Mammary epithelial cell (primary cell): ENCODE measurements at regions of chrX and their contacts with region 1.

Region 1: DNA sequence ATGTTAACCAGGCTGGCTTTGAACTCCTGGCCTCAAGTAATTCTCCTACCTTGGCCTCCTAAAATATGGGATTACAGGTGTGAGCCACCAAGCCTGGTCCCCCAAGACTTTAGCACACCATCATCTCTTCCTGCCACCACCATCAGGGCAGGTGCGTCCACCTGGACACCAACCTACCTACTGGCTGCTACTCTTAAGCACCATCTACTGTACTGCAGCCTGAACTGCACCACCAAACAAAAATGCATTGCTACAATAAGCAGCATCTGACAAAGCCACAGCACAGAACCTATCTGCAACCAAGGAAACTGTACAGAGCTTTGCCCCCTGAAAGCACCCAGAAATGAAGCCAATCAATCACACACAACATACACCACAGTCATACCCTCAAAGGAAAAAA is 139.7 kb downstream of the EFHC2 start:
- DNase-seq: peak; percentile 3
- H3K4me3 ChIP-seq: no peak overlapping the region
- H3K27ac ChIP-seq: no peak overlapping the region
- H3K4me1 ChIP-seq: no peaks in the 10 kb centered on the region
- H3K27me3 ChIP-seq: peaks cover 2% of the 10 kb centered on the region
- CTCF ChIP-seq: peak; percentile 42 to 62

Region 2: GRCh38 chrX:44267116-44267515 is 63.3 kb after region 1 on chrX:
- CTCF ChIA-PET with region 1: no interaction called
- dilution Hi-C with region 1: no loop called
- in situ Hi-C with region 1: no loop called
- intact Hi-C with region 1: no loop called
- DNase-seq: no peak
- H3K4me3 ChIP-seq: no peak overlapping the region
- H3K27ac ChIP-seq: no peak overlapping the region
- H3K4me1 ChIP-seq: no peaks in the 10 kb centered on the region
- H3K27me3 ChIP-seq: peaks cover 3% of the 10 kb centered on the region
- CTCF ChIP-seq: no peak

Region 3: GRCh38 chrX:44352758-44353157 is 149.0 kb after region 1 on chrX:
- CTCF ChIA-PET with region 1: no interaction called
- dilution Hi-C with region 1: no loop called
- in situ Hi-C with region 1: no loop called
- intact Hi-C with region 1: loop called (anchors 5 kb)
- DNase-seq: peak; percentile 80
- H3K4me3 ChIP-seq: no peak overlapping the region
- H3K27ac ChIP-seq: peak overlapping the region; percentile 38
- H3K4me1 ChIP-seq: peaks cover 12% of the 10 kb centered on the region
- H3K27me3 ChIP-seq: no peaks in the 10 kb centered on the region
- CTCF ChIP-seq: no peak

Region 4: GRCh38 chrX:44747969-44748368 is 544.2 kb after region 1 on chrX:
- CTCF ChIA-PET with region 1: no interaction called
- dilution Hi-C with region 1: no loop called
- in situ Hi-C with region 1: no loop called
- intact Hi-C with region 1: no loop called
- DNase-seq: peak; percentile 57
- H3K4me3 ChIP-seq: no peak overlapping the region
- H3K27ac ChIP-seq: no peak overlapping the region
- H3K4me1 ChIP-seq: no peaks in the 10 kb centered on the region
- H3K27me3 ChIP-seq: peaks cover 3% of the 10 kb centered on the region
- CTCF ChIP-seq: no peak